Activated T-helper 1 cell treated with anti-CD3 and anti-CD28 coated beads, Interleukin-12 subunit alpha, Interleukin-12 subunit beta, Interleukin-2, Interleukin-4 antibody, amounts not matched to agents 30 ng/mL and 10 ng/mL and 1 ng/mL, durations not matched to agents 14 hours and 24 hours and 36 hours (primary cell): ENCODE measurements at regions of chrX and their contacts with region 1.

Region 1: GRCh38 chrX:107742700-107743191 is 32.8 kb downstream of the TSC22D3 start:
- DNase-seq: no peak
- H3K4me3 Mint-ChIP-seq: peak overlapping the region; percentile 66
- H3K27ac Mint-ChIP-seq: peak overlapping the region; percentile 97
- H3K4me1 Mint-ChIP-seq: peaks cover 14% of the 10 kb centered on the region
- H3K27me3 Mint-ChIP-seq: peaks cover 2% of the 10 kb centered on the region

Region 2: DNA sequence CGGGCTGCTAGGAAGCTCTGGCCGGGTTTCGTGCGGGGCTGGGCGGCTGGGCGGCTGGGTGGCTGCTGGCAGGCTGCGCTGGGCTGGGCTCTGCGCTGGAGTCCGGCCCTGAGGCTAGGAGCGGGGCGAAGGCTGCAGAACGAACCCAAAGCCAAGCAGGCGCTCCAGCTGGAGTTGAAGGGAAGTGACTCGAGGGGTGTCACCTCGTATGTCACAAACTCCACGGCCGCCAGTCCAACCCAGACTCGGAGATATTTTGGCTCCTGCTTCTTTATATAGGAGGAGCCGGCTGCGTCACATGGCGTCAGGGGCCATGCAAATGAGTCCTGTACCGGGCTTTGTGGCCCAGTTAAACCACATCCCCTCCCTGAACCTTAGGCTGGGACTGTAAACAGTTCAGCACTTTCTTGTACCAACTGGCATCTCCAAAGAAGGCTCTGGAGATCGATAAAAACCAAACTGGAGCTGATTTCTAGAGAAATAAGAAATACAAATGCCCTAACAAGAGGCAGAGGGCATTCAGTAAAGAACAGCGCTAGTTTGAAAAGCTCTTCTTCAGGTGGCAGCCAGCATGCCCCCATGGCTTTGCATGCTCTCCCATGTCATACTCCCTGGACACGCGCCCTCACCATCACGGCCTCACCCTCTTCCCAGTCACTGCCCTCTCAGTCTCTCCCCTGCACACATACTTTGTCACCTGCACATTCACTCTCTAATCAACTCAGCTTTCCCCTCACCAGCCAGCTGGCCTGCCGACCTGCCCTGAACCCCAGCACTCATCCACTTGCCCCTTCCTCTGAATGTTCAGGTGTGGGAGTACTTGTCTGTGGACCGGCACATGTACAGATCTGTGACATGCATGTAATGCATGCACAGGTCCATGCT is 25.7 kb before region 1 on chrX:
- intact Hi-C with region 1: loop called (anchors 1 kb)
- DNase-seq: peak; percentile 84
- H3K4me3 Mint-ChIP-seq: peak overlapping the region; percentile 93
- H3K27ac Mint-ChIP-seq: peak overlapping the region; percentile 87
- H3K4me1 Mint-ChIP-seq: peaks cover 46% of the 10 kb centered on the region
- H3K27me3 Mint-ChIP-seq: no peaks in the 10 kb centered on the region

Region 3: GRCh38 chrX:108148524-108148923 is 405.8 kb after region 1 on chrX:
- intact Hi-C with region 1: no loop called
- DNase-seq: no peak
- H3K4me3 Mint-ChIP-seq: peak overlapping the region; percentile 6
- H3K27ac Mint-ChIP-seq: peak overlapping the region; percentile 11
- H3K4me1 Mint-ChIP-seq: peaks cover 14% of the 10 kb centered on the region
- H3K27me3 Mint-ChIP-seq: no peaks in the 10 kb centered on the region